CD4-positive, alpha-beta memory T cell (primary cell): ENCODE measurements at regions of chr15 and their contacts with region 1.

Region 1: GRCh38 chr15:76345880-76346668 is 9.5 kb downstream of the ISL2 start:
- DNase-seq: peak in 1 of 5 donors; percentile 39
- H3K4me3 ChIP-seq: peak overlapping the region in 1 of 2 donors; percentile 37
- H3K4me3 Mint-ChIP-seq: peak overlapping the region in 7 of 8 donors; percentile 49 to 86 (median 67)
- H3K27ac ChIP-seq: no peak overlapping the region
- H3K27ac Mint-ChIP-seq: no peak overlapping the region
- H3K4me1 ChIP-seq: peaks cover 40% of the 10 kb centered on the region
- H3K4me1 Mint-ChIP-seq: peaks cover 17 to 37% (median 18%) of the 10 kb centered on the region in 4 donors
- H3K27me3 ChIP-seq: peaks cover 48% of the 10 kb centered on the region
- H3K27me3 Mint-ChIP-seq: peaks cover 41 to 45% of the 10 kb centered on the region in 2 donors

Region 2: DNA sequence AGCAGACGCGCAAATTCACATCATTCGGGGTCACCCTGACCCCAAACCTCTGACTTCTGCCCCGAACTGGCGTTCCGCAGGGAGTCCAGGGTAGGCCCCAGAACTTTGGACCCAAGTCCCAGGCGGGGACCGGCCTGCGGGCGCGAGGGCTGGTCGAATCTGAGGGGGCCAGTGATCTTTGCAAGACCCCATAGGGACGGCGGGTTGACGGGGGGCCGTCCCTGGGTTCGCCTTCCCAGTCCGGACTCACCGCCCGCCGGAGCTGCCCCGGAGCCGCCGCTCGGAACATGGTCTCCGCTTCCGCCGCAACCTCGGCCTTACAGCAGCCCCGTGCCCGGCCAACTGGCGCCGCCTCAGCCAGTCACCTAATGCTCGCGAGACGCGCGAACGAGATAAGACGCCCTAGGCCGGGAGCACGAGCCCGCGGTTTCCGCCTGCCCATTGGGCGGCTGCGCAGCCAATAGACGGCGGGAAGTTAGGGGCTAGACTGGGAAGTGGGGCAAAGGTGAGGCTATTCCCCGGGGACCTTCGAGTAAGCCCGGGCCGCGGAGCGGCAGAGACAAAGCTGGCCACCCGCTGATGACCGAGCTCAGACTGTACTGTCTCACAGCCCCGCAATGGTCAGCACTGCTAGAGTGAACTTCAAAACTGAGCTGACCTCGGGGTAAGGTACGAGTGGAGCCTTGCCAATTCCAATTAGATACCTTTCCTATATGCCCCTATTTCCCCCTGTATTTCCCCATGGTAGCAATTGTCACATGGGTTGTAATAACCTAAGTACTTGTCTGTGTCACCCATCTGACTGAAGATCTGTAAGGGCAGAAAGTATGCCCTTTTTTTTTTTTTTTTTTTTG is 34.7 kb before region 1 on chr15 and contains the start of gene ETFA:
- CTCF ChIA-PET with region 1: no interaction called
- POLR2A ChIA-PET with region 1: no interaction called
- intact Hi-C with region 1: loop called (anchors 2 kb)
- DNase-seq: peak; percentile 81 to 86 (median 84)
- H3K4me3 ChIP-seq: peak within 1 kb of the TSS; percentile 51 to 74
- H3K4me3 Mint-ChIP-seq: peak within 1 kb of the TSS; percentile 88 to 96 (median 92)
- H3K27ac ChIP-seq: peak within 1 kb of the TSS; percentile 72
- H3K27ac Mint-ChIP-seq: peak within 1 kb of the TSS; percentile 59 to 94 (median 91)
- H3K4me1 ChIP-seq: peaks cover 21% of the 10 kb centered on the region
- H3K4me1 Mint-ChIP-seq: peaks cover 22 to 44% (median 33%) of the 10 kb centered on the region in 4 donors
- H3K27me3 ChIP-seq: no peaks in the 10 kb centered on the region
- H3K27me3 Mint-ChIP-seq: peaks cover 0 to 1% of the 10 kb centered on the region in 2 donors
- total RNA-seq, gene ETFA: 47.7 to 49.4 TPM